IMR-90 (cell line): ENCODE measurements at regions of chr7 and their contacts with region 1.

Region 1: DNA sequence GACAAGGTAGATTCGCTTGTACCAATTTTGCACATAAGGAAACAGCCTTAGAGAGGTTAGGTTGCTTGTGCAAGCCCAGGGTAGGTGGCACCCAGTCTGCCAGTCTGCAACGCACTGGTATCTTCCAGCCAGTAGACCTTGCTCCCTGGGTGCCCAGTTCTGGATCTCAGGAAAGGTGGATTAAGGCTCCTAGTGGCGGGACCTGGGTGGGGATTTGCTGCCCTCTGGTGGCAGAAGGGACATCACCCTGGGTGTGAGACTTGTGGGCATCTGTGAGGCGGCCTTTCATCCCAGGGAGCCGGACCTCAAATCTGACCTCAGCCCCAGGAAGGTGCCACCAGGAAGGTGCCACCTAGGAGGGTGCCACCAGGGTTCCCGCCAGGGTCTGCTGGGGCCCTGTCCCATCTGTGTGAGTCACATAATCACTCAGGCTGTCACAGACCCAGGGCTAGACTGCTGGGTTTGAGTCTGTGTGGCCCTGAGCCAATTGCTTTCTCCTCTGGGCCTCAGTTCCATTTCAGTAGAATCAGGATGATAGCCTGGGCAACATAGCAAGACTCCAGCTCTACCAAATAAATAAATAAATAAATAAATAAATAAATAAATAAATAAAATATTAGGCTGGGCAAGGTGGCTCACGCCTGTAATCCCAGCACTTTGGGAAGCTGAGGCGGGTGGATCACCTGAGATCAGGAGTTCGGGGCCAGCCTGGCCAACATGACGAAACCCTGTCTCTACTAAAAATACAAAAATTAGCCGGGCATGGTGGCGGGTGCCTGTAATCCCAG is 5.3 kb upstream of the PRKRIP1 start:
- DNase-seq: peak; percentile 66
- ATAC-seq: peak; percentile 86
- H3K4me3 ChIP-seq: no peak overlapping the region
- H3K27ac ChIP-seq: no peak overlapping the region
- H3K4me1 ChIP-seq: no peaks in the 10 kb centered on the region
- H3K27me3 ChIP-seq: no peaks in the 10 kb centered on the region
- CTCF ChIP-seq: peak; percentile 84
- POLR2A ChIP-seq: no peak
- RAD21 ChIP-seq: peak; percentile 81

Region 2: DNA sequence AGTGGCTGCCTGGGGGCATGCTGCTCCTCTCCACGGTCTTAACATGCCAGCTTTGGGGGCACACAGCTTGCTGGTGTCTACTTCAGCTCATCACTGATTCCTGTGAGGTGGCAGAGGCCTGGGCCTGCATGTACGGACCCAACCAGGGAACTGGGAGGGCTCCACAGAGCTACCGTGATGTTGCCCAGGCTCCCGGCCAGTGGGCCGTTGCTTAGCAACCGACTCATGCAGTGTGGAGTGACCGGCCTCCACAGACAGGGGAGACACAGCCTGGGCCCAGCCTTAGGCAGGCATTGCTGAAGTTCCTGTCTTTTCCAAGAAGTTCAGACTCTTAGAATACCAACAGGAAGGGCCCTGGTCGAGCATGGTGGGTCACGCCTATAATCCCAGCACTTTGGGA is 130.0 kb before region 1 on chr7:
- CTCF ChIA-PET with region 1: no interaction called
- POLR2A ChIA-PET with region 1: no interaction called
- dilution Hi-C with region 1: no loop called
- in situ Hi-C with region 1: no loop called
- intact Hi-C with region 1: no loop called
- DNase-seq: peak; percentile 68
- ATAC-seq: peak; percentile 87
- H3K4me3 ChIP-seq: no peak overlapping the region
- H3K27ac ChIP-seq: no peak overlapping the region
- H3K4me1 ChIP-seq: peaks cover 4% of the 10 kb centered on the region; the same call in 1 of the 2 replicates
- H3K27me3 ChIP-seq: no peaks in the 10 kb centered on the region
- CTCF ChIP-seq: no peak
- POLR2A ChIP-seq: no peak
- RAD21 ChIP-seq: no peak

Region 3: GRCh38 chr7:102279537-102280400 is 111.1 kb before region 1 on chr7:
- CTCF ChIA-PET with region 1: no interaction called
- POLR2A ChIA-PET with region 1: no interaction called
- dilution Hi-C with region 1: no loop called
- in situ Hi-C with region 1: loop called (anchors 5 kb)
- intact Hi-C with region 1: loop called (anchors 1 kb)
- DNase-seq: peak; percentile 55
- ATAC-seq: peak; percentile 93
- H3K4me3 ChIP-seq: no peak overlapping the region
- H3K27ac ChIP-seq: no peak overlapping the region
- H3K4me1 ChIP-seq: no peaks in the 10 kb centered on the region; the same call in 1 of the 2 replicates
- H3K27me3 ChIP-seq: no peaks in the 10 kb centered on the region
- CTCF ChIP-seq: peak; percentile 80
- POLR2A ChIP-seq: no peak
- RAD21 ChIP-seq: peak; percentile 92

Region 4: GRCh38 chr7:102306875-102307677 is 83.8 kb before region 1 on chr7:
- CTCF ChIA-PET with region 1: no interaction called
- POLR2A ChIA-PET with region 1: no interaction called
- dilution Hi-C with region 1: no loop called
- in situ Hi-C with region 1: no loop called
- intact Hi-C with region 1: no loop called
- DNase-seq: peak; percentile 78
- ATAC-seq: peak; percentile 91
- H3K4me3 ChIP-seq: no peak overlapping the region
- H3K27ac ChIP-seq: peak overlapping the region; percentile 31
- H3K4me1 ChIP-seq: peaks cover 11% of the 10 kb centered on the region
- H3K27me3 ChIP-seq: no peaks in the 10 kb centered on the region
- CTCF ChIP-seq: no peak
- POLR2A ChIP-seq: no peak
- RAD21 ChIP-seq: no peak

Region 5: DNA sequence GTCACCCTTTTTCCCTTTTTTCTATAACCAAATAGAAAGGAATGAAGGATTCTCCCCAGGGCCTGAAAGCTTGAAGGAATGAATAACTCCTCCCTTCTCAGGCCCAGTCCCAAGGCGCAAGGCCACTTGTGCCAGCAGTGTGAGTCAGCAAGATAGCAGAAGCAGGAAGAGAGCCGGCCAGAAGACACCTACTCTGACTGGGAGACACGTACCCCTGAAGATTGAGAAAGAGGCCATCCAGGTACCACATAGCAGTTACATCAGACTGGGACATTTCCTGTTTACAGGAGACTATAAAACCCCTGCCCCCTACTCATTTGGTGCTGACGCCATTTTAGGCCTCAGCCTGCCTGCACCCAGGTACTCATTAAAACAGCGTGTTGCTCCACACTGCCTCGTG is 587.4 kb after region 1 on chr7:
- CTCF ChIA-PET with region 1: no interaction called
- POLR2A ChIA-PET with region 1: no interaction called
- dilution Hi-C with region 1: no loop called
- in situ Hi-C with region 1: no loop called
- intact Hi-C with region 1: no loop called
- DNase-seq: peak; percentile 82
- ATAC-seq: peak; percentile 51
- H3K4me3 ChIP-seq: no peak overlapping the region
- H3K27ac ChIP-seq: no peak overlapping the region
- H3K4me1 ChIP-seq: no peaks in the 10 kb centered on the region; the same call in 1 of the 2 replicates
- H3K27me3 ChIP-seq: no peaks in the 10 kb centered on the region
- CTCF ChIP-seq: no peak
- POLR2A ChIP-seq: no peak
- RAD21 ChIP-seq: no peak